ENCODE measurements at regions of chr6 and their contacts with region 1.

Region 1: DNA sequence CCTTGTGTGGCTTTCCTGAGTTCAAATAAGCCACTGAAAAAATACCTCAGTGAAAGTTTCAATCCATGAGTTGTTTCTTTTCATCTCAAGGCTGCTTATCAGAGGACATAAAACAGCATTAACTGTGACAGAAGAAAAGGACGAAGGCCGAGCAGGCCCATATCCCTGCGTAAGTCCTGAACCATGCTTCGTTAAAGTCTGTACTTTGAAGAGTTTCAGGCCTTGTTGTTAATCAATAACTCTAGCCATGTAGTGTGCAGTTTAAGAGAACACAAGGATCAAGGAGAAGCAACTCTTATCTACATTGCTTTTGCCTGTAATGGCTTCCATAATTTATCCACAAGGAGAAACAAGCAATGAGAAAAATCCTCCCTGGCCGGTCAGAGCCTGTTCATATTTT is 165.4 kb downstream of the UST start:
- DNase-seq: no peak
- ATAC-seq: no peak
- H3K4me3 ChIP-seq: no peak overlapping the region
- H3K27ac ChIP-seq: no peak overlapping the region
- H3K4me1 ChIP-seq: no peaks in the 10 kb centered on the region
- H3K27me3 ChIP-seq: peaks cover 2 to 20% of the 10 kb centered on the region in 2 experiments
- CTCF ChIP-seq: no peak
- EP300 ChIP-seq: no peak
- POLR2A ChIP-seq: no peak
- RAD21 ChIP-seq: no peak

Region 2: DNA sequence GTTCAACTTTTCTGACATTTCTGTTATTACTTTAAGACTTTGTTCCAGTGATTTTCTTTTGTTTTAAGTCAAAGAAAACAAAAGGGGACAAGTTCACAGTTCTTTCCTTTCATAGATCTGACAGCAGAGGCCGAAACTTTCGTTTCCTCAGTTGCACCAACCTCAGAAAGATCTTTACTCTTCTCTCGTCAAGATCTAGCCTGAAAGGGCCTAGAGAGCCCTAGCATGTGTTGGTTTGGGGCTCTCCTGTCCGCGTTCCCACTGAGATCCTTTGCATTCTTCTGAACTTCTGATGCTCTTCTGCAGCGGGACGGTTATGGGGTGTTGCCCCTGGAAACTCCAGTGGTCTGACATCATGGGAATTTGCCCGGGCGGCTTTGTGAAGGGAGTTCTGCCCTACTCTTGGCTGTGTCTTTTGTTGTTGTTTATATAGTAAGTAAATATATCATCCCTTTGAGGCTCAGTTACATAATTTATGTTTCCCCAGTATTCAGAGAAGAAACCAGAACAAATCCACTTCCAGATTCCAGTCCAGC is 440.6 kb before region 1 on chr6:
- CTCF ChIA-PET with region 1: no interaction called
- POLR2A ChIA-PET with region 1: no interaction called
- in situ Hi-C with region 1: no loop called
- intact Hi-C with region 1: no loop called
- DNase-seq: no peak
- ATAC-seq: no peak
- H3K4me3 ChIP-seq: no peak overlapping the region
- H3K27ac ChIP-seq: no peak overlapping the region
- H3K4me1 ChIP-seq: no peaks in the 10 kb centered on the region
- H3K27me3 ChIP-seq: peaks cover 17 to 26% of the 10 kb centered on the region in 2 experiments
- CTCF ChIP-seq: no peak
- EP300 ChIP-seq: no peak
- POLR2A ChIP-seq: no peak
- RAD21 ChIP-seq: no peak

Region 3: DNA sequence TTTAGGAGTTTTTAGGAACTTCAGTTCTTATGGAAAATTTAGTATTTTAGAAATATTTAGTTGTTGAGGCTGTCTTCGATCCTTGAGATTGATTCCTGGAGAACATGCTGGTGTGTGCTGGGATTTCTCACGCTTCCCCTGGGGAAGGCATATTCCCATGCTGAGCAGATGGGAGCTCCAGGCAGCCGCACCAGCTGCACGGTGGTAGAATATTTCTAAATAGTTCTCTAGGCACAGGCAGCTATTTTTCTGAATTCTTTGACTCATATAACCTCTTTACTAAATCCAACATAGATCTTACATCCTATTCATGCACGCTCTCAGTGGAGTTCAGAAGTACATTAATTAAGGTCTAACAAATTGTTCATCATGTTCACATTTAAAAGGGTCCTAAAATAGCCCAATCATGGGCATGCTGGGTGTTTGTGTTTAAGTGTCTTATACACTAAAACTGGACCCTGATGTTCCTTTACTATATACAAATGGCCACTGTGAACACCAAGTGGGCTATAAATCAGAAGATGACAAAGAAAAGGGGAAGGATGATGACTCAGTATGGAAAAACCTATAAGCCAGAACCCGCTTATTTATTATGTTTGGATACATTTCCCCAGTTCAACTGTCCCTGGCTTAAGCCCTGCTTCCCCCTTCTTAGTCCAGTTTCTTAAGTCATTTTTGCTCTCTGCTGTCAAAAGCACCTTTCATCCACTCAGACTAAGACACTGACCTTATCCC is 26.9 kb before region 1 on chr6:
- CTCF ChIA-PET with region 1: no interaction called
- POLR2A ChIA-PET with region 1: interaction called, 3 read pairs
- in situ Hi-C with region 1: no loop called
- intact Hi-C with region 1: loop called (anchors 1 kb)
- DNase-seq: no peak
- ATAC-seq: no peak
- H3K4me3 ChIP-seq: no peak overlapping the region
- H3K27ac ChIP-seq: no peak overlapping the region
- H3K4me1 ChIP-seq: no peaks in the 10 kb centered on the region
- H3K27me3 ChIP-seq: peaks cover 16 to 34% of the 10 kb centered on the region in 2 experiments
- CTCF ChIP-seq: no peak
- EP300 ChIP-seq: no peak
- POLR2A ChIP-seq: no peak
- RAD21 ChIP-seq: no peak

Region 4: DNA sequence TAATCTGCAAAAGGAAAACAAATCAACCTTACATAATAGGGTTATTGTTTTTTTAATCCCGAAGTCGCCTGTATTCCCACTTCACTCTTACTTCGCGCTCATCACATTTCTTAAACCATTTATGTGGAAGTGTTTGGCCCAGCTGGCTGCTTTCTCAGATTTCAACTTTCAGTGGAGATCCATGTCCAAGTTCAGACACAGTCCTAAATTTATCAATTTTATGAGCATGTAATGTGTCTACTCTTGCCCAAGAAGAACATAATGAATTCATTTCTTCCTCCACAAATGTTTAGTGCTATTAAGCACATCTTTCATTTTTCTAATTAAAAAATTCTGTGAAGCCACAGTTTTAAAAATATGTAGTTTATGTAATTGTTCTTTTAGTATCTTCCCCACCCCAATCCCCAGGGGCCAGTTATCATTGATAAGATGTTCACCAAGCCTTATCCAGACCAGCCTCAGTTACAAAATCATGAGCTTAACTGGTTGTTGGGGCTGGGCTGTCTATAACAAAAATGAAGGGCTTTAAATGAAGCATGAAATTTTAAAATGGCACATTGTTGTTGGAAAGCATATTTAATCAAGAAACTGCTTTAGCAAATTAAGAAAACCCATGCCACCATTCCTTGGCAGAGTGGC is 13.8 kb before region 1 on chr6:
- CTCF ChIA-PET with region 1: no interaction called
- POLR2A ChIA-PET with region 1: no interaction called
- in situ Hi-C with region 1: no loop called
- intact Hi-C with region 1: no loop called
- DNase-seq: no peak
- ATAC-seq: no peak
- H3K4me3 ChIP-seq: no peak overlapping the region
- H3K27ac ChIP-seq: no peak overlapping the region
- H3K4me1 ChIP-seq: no peaks in the 10 kb centered on the region
- H3K27me3 ChIP-seq: peaks cover 0 to 9% of the 10 kb centered on the region in 2 experiments; a peak in 2 of 5 replicates
- CTCF ChIP-seq: no peak
- EP300 ChIP-seq: no peak
- POLR2A ChIP-seq: no peak
- RAD21 ChIP-seq: no peak